HepG2 (cell line): ENCODE measurements at regions of chr6 and their contacts with region 1.

Region 1: GRCh38 chr6:168117942-168118341 is 38.9 kb upstream of the FRMD1 start:
- DNase-seq: no peak
- ATAC-seq: no peak
- H3K4me3 ChIP-seq: no peak overlapping the region
- H3K27ac ChIP-seq: no peak overlapping the region
- H3K4me1 ChIP-seq: peaks cover 14% of the 10 kb centered on the region
- H3K27me3 ChIP-seq: peaks cover under 1 to 2% of the 10 kb centered on the region in 2 experiments; a peak in 2 of 5 replicates
- CTCF ChIP-seq: peak; percentile 54
- EP300 ChIP-seq: no peak
- POLR2A ChIP-seq: no peak
- RAD21 ChIP-seq: no peak

Region 2: DNA sequence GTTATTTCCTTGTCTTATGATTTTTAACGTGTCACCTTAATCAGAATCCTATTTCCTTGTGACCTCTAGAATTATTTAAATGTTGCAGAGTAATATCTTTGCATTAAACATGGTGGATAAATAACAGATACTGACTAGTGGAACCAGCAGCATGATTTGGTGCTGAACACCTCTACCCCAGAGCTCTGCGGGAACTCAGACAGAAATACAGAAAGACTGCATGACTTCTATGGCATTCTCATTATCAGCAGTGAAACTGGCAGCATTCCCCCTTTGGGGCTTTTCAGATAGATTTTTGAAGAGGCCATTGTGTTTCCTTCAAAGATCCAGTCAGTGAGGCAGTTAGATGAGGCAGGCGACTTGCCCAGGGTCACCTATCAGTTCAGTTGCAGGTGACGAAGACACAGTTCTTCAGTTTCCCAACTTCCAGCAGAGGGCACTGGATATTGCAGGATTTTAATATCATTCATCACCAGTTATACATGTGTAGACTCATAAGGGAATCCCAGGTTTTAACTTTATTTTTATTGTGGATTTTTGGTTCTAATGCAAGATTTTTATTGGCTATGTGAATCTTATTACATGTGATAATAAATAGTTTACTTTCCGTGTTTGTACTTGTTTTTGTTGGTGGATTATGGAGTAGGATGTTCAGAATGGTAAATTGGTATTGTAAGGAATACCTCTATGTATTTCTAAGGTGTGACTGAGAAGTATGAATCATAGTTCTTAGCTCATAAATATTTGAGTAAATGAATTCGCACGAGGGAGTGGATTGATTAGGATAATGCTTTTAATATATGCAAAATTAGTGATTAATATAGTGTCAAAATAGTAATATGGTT is 209.9 kb before region 1 on chr6:
- CTCF ChIA-PET with region 1: interaction called, 4 read pairs
- POLR2A ChIA-PET with region 1: no interaction called
- in situ Hi-C with region 1: no loop called
- intact Hi-C with region 1: loop called (anchors 5 kb)
- DNase-seq: peak; percentile 51
- ATAC-seq: peak; percentile 86
- H3K4me3 ChIP-seq: no peak overlapping the region
- H3K27ac ChIP-seq: no peak overlapping the region
- H3K4me1 ChIP-seq: peaks cover 3% of the 10 kb centered on the region; the same call in 1 of the 2 replicates
- H3K27me3 ChIP-seq: no peaks in the 10 kb centered on the region
- CTCF ChIP-seq: peak; percentile 69
- EP300 ChIP-seq: no peak
- POLR2A ChIP-seq: no peak
- RAD21 ChIP-seq: 0 out of 2 replicates have a peak, but pooled peaks have one; percentile 28

Region 3: GRCh38 chr6:168050881-168051586 is 66.9 kb before region 1 on chr6:
- CTCF ChIA-PET with region 1: no interaction called
- POLR2A ChIA-PET with region 1: no interaction called
- in situ Hi-C with region 1: no loop called
- intact Hi-C with region 1: no loop called
- DNase-seq: no peak
- ATAC-seq: peak; percentile 16; the same call in 2 of the 3 replicates
- H3K4me3 ChIP-seq: no peak overlapping the region
- H3K27ac ChIP-seq: no peak overlapping the region
- H3K4me1 ChIP-seq: no peaks in the 10 kb centered on the region
- H3K27me3 ChIP-seq: peaks cover 19 to 75% of the 10 kb centered on the region in 2 experiments
- CTCF ChIP-seq: peak; percentile 74
- EP300 ChIP-seq: no peak
- POLR2A ChIP-seq: no peak
- RAD21 ChIP-seq: no peak

Region 4: GRCh38 chr6:168107212-168107983 is 10.5 kb before region 1 on chr6:
- CTCF ChIA-PET with region 1: no interaction called
- POLR2A ChIA-PET with region 1: no interaction called
- in situ Hi-C with region 1: no loop called
- intact Hi-C with region 1: no loop called
- DNase-seq: no peak
- ATAC-seq: no peak
- H3K4me3 ChIP-seq: no peak overlapping the region
- H3K27ac ChIP-seq: no peak overlapping the region
- H3K4me1 ChIP-seq: no peaks in the 10 kb centered on the region
- H3K27me3 ChIP-seq: peaks cover 4 to 34% of the 10 kb centered on the region in 2 experiments; a peak in 4 of 5 replicates
- CTCF ChIP-seq: no peak
- EP300 ChIP-seq: no peak
- POLR2A ChIP-seq: no peak
- RAD21 ChIP-seq: no peak

Region 5: DNA sequence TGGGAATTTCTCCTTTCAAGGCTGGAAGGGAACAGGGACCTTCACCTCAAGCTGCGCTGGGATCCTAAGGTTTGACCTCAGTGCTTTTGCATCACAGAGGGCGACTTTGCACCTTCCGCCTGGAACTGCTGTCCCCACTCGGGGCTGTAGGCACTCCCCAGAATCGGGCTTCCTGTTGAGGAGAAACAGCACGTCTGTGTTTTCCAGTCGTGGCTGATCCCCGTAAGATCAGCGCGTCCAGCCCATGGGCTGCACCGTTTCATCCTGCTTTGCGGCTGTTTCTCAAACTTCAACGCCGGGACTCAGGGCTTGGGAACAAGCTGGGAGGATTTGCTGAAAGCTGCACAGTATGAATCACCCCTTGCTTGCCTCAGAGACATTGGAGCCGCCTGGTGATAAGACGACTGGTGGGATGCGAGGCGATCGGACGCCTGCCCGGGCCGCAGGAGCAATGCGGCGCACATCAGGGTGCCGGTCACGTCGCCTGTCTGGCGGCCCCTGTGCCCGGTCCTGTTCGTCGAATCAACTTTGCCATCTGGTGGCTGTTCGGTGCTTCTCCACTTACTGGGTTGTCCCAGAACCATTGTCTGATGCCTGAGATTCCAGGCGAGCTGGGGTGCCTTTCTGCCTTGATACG is 14.7 kb after region 1 on chr6:
- CTCF ChIA-PET with region 1: no interaction called
- POLR2A ChIA-PET with region 1: no interaction called
- in situ Hi-C with region 1: no loop called
- intact Hi-C with region 1: no loop called
- DNase-seq: peak; percentile 53
- ATAC-seq: peak; percentile 86
- H3K4me3 ChIP-seq: no peak overlapping the region
- H3K27ac ChIP-seq: no peak overlapping the region
- H3K4me1 ChIP-seq: no peaks in the 10 kb centered on the region
- H3K27me3 ChIP-seq: peaks cover 6 to 54% of the 10 kb centered on the region in 2 experiments; a peak in 4 of 5 replicates
- CTCF ChIP-seq: peak; percentile 87
- EP300 ChIP-seq: no peak
- POLR2A ChIP-seq: no peak
- RAD21 ChIP-seq: peak; percentile 86